Breast epithelium (tissue), 4 donors: ENCODE measurements at regions of chr22 and their contacts with region 1.

Region 1: DNA sequence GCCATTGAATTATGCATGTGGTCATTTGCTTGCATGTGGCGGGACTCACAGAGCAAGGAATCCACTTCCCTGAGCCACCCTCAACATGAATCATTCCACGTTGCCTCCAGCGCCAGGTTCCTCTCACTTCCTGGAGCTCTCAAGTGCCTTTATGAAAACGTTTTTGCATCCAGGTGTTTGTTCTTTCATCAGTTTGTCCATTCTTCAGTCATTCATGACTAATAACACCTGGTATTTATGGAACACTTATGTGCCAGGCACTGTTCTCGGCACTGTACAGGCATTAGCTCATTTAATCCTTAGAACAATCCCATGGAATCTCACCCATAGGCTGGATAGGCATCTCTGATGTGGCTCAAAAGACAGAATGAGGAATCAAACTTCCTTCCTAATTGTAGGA is 256.1 kb upstream of the SYN3 start:
- DNase-seq: no peak
- H3K4me3 ChIP-seq: no peak overlapping the region
- H3K27ac ChIP-seq: no peak overlapping the region
- H3K4me1 ChIP-seq: no peaks in the 10 kb centered on the region
- H3K27me3 ChIP-seq: no peaks in the 10 kb centered on the region
- CTCF ChIP-seq: no peak
- POLR2A ChIP-seq: no peak

Region 2: GRCh38 chr22:33302049-33302545 is 12.2 kb before region 1 on chr22:
- intact Hi-C with region 1: loop called (anchors 1 kb)
- DNase-seq: peak; percentile 61 to 79
- H3K4me3 ChIP-seq: no peak overlapping the region
- H3K27ac ChIP-seq: no peak overlapping the region
- H3K4me1 ChIP-seq: no peaks in the 10 kb centered on the region
- H3K27me3 ChIP-seq: no peaks in the 10 kb centered on the region
- CTCF ChIP-seq: peak; percentile 40 to 94 (median 80)
- POLR2A ChIP-seq: no peak